ENCODE measurements at regions of chr17 and their contacts with region 1.

Region 1: DNA sequence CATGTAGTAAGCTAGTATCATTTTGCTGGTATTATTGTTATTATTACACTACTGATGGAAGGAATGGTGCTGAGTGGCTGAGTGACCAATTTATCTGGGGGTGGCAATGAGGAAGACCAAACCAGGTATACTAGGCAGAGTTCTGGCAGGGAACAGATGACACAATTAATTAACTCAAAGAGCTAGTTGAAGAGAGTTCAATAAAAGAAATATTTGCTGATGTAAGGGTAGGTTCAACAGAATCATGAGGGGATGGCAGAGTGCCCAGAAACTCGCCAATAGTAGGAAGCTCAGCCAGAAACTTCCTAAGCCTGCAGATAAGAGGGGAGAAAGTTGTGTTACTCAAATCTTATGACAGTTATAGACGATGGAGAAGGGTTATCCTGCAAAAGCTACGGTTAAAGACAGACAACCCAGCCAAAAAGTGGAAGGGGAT is 352.5 kb downstream of the KCNJ2 start:
- DNase-seq: no peak
- H3K4me3 ChIP-seq: no peak overlapping the region
- H3K4me3 Mint-ChIP-seq: no peak overlapping the region
- H3K27ac Mint-ChIP-seq: no peak overlapping the region
- H3K4me1 ChIP-seq: peaks cover 17% of the 10 kb centered on the region
- H3K4me1 Mint-ChIP-seq: peaks cover 20% of the 10 kb centered on the region
- H3K27me3 ChIP-seq: no peaks in the 10 kb centered on the region
- H3K27me3 Mint-ChIP-seq: no peaks in the 10 kb centered on the region
- CTCF ChIP-seq: no peak

Region 2: DNA sequence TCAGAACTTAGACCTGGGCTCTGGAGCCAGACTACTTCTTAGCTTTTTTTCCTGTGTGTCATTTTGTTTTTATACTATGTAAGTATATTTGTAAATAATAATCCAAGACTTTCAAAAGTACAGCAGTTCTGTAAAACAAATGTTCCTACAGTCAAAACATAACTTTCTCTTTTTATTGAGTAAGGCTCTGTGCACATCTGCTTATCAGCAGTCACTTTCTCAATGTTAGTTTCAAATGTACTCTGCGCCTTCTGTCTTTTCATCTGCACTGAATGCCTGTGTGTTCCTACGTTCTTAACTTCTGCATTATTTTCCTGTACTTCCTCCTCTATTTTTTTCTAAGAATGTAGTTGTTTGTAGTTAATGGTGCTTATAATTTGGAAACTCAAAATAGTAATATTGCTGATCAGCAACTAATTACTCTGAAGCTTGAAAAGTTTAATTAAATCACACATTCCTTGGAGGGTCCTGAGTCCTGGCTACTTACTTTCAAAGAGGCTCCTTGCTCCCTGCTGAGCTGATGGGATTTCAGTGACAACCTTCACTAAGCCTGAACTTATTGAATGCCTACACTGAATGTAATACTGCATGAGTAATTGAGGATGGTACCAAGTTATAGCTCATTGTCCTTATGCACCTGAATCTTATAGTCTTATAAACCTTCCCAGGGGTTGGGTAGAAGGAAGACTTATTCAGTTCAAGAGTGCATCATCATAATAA is 22.6 kb before region 1 on chr17:
- CTCF ChIA-PET with region 1: no interaction called
- POLR2A ChIA-PET with region 1: no interaction called
- intact Hi-C with region 1: loop called (anchors 1 kb)
- DNase-seq: no peak
- H3K4me3 ChIP-seq: no peak overlapping the region
- H3K4me3 Mint-ChIP-seq: no peak overlapping the region
- H3K27ac Mint-ChIP-seq: no peak overlapping the region
- H3K4me1 ChIP-seq: peaks cover 27% of the 10 kb centered on the region
- H3K4me1 Mint-ChIP-seq: peaks cover 18% of the 10 kb centered on the region
- H3K27me3 ChIP-seq: no peaks in the 10 kb centered on the region
- H3K27me3 Mint-ChIP-seq: no peaks in the 10 kb centered on the region
- CTCF ChIP-seq: no peak